OCI-LY7 (cell line): ENCODE measurements at regions of chr2 and their contacts with region 1.

Region 1: GRCh38 chr2:68121873-68122679 is 35.6 kb upstream of the PNO1 start:
- DNase-seq: peak; percentile 78
- H3K4me3 ChIP-seq: peak overlapping the region; percentile 47
- H3K27ac ChIP-seq: peak overlapping the region; percentile 96
- H3K4me1 ChIP-seq: peaks cover 48% of the 10 kb centered on the region
- CTCF ChIP-seq: peak; percentile 100

Region 2: DNA sequence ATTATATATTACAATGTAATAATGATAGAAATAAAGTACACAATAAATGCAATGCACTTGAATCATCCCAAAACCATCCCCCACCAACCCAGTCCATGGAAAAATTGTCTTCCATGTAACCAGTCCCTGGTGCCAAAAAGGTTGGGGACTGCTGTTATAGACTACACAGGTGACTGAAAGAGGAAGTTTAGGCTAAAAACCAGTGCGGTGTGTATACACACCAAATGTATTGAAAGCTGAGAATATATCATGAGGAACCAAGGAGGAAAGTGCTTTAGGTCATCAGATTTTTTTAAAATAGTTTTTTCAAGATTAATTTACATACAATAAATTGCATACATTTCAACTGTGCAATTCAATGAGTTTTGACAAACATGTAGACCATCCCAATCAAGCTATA is 38.7 kb before region 1 on chr2:
- CTCF ChIA-PET with region 1: no interaction called
- POLR2A ChIA-PET with region 1: no interaction called
- intact Hi-C with region 1: loop called (anchors 1 kb)
- DNase-seq: peak; percentile 68
- H3K4me3 ChIP-seq: no peak overlapping the region
- H3K27ac ChIP-seq: peak overlapping the region; percentile 32
- H3K4me1 ChIP-seq: peaks cover 37% of the 10 kb centered on the region
- CTCF ChIP-seq: no peak

Region 3: DNA sequence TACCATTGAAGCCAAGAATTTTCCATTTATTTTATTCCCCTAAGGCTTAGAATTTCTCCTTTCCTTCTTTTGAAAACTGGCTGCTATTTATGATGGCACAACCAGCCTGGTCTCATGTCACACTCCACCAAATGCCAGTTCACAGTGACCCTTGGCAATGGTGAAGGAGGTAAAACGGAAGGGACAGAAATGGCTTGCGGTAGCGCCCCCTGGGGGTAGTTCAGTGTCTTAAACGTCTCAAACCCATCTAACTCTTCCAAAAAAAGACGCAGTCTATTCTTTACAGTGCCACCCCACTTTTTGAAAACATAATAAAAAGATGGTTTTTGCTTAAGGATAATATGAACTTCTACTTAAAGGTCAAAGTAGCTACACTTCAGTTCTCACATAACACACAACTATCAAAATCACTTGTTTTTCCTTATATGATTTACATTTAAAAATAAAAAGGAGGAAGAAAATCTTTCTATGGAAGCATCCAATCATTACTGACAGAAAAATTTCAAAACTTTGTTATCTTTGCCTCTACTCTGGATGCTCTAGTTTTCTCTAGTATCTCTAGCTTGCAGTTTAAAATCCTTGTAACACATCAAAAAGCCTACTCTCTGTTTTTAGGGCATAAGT is 63.6 kb after region 1 on chr2:
- CTCF ChIA-PET with region 1: no interaction called
- POLR2A ChIA-PET with region 1: no interaction called
- intact Hi-C with region 1: loop called (anchors 2 kb)
- DNase-seq: peak; percentile 78
- H3K4me3 ChIP-seq: no peak overlapping the region
- H3K27ac ChIP-seq: no peak overlapping the region
- H3K4me1 ChIP-seq: peaks cover under 1% of the 10 kb centered on the region
- CTCF ChIP-seq: peak; percentile 98

Region 4: DNA sequence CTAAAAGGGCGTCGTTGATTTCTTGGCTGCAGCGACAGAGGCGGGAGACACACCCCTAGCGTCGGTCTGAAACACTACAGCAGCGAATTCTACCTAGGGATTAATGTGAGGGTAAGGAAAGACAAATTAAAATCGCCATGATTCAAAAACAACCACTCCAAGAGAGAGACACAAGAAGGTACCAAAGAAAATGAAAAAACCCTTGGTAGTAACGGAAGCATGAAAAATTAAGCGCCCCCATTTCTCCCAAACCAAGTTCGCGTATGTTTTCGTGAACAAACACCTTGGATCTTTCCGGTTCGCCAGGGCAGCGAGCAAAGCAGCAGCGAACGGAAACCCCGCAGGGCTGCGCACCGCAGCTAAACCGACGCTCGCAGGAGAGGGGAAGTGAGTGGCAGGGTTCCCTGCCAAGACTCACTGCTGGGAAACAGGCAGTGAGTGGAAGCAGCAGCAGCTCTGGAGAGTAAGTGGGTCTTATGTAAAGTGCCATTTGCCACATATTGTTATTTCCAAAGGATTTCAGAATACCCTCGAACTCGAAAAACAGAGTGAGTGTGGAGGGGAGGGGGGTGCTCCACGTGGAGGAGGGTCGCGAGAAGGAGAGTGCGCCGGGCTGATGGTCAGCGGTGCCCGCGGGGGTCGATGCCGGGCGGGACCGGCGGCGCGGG is 129.2 kb after region 1 on chr2:
- CTCF ChIA-PET with region 1: no interaction called
- POLR2A ChIA-PET with region 1: interaction called, 3 read pairs
- intact Hi-C with region 1: loop called (anchors 1 kb)
- DNase-seq: peak; percentile 92
- H3K4me3 ChIP-seq: peak overlapping the region; percentile 89
- H3K27ac ChIP-seq: peak overlapping the region; percentile 89
- H3K4me1 ChIP-seq: peaks cover 63% of the 10 kb centered on the region
- CTCF ChIP-seq: peak; percentile 88

Region 5: DNA sequence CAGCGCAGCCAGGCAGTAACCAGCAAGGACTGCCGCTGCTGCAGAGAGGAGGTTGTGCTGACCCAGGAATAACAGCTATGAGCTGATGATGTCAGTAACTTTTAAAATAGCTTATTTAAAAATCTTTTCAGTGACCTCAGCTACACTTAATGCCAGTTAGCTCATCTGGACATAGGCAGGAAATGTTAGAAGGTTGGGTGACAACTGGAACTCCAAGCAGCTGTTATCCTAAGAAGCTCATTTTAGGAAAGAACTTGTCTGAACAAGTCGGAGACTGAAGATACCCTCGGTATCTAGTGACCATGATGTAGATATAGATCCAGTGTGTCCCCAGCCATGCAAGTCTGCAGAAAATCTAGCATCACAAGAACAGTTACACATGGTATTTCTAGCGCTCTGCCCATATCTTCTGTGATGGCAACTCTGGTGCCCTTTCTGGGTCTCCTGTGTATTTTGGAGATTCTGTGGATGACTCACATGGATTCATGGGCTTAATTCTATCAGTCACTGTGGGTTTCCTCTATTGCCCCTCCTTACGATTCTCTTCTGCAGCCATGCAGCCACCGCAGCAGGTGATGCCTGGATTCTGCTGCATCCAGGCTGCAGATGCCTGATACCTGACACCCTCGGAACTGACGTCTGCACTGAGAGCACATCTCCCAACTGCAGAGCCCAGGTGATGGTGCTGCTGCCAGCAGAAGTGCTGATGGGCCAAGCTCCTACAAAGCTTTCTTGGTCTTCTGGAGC is 223.2 kb after region 1 on chr2:
- CTCF ChIA-PET with region 1: no interaction called
- POLR2A ChIA-PET with region 1: no interaction called
- intact Hi-C with region 1: no loop called
- DNase-seq: no peak
- H3K4me3 ChIP-seq: no peak overlapping the region
- H3K27ac ChIP-seq: no peak overlapping the region
- H3K4me1 ChIP-seq: no peaks in the 10 kb centered on the region
- CTCF ChIP-seq: no peak